Activated naive CD4-positive, alpha-beta T cell treated with anti-CD3 and anti-CD28 coated beads for 36 hours (primary cell): ENCODE measurements at regions of chr9 and their contacts with region 1.

Region 1: GRCh38 chr9:114830546-114830945 is 24.7 kb upstream of the TNFSF15 start:
- DNase-seq: no peak
- H3K4me3 Mint-ChIP-seq: no peak overlapping the region
- H3K27ac Mint-ChIP-seq: no peak overlapping the region
- H3K4me1 Mint-ChIP-seq: peaks cover 16% of the 10 kb centered on the region
- H3K27me3 Mint-ChIP-seq: no peaks in the 10 kb centered on the region

Region 2: DNA sequence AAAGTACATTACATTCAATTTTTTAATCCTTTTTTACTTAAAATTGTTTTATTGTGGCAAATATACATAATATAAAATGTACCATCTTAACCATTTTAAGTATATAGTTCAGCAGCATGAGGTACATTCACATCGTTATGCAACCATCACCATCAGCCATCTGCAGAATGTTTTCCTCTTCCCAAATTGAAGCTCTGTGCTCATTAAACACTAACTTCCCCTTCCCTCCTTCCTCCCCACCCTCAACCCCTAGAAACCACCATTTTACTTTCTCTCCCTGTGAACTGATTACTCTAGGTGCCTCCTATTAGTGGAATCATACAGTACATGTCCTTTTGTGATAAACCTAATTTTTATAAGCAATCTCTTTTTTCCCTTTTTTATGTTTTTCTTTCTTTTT is 188.6 kb before region 1 on chr9:
- CTCF ChIA-PET with region 1: no interaction called
- intact Hi-C with region 1: no loop called
- DNase-seq: no peak
- H3K4me3 Mint-ChIP-seq: no peak overlapping the region
- H3K27ac Mint-ChIP-seq: peak overlapping the region; percentile 1
- H3K4me1 Mint-ChIP-seq: peaks cover 5% of the 10 kb centered on the region
- H3K27me3 Mint-ChIP-seq: no peaks in the 10 kb centered on the region

Region 3: DNA sequence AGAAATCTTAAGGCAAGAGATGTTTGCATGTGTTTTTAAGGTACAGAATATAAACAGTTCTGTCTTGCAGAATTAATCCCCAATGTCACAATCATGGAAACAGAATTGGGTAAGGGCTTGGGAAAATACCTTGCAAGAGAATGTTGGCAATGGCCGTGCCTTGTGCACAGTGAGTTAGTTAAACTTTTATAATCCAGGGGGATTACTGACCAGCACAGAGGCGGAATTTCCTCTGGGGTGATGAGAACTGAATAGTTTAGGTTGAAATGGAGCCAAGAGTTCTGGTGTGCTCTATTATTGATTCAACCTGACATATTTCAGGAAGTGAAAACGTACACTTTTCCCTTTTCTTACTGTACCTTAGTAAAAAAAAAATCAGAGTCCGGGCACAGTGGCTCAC is 44.3 kb before region 1 on chr9:
- CTCF ChIA-PET with region 1: no interaction called
- intact Hi-C with region 1: no loop called
- DNase-seq: no peak
- H3K4me3 Mint-ChIP-seq: no peak overlapping the region
- H3K27ac Mint-ChIP-seq: no peak overlapping the region
- H3K4me1 Mint-ChIP-seq: no peaks in the 10 kb centered on the region
- H3K27me3 Mint-ChIP-seq: no peaks in the 10 kb centered on the region

Region 4: DNA sequence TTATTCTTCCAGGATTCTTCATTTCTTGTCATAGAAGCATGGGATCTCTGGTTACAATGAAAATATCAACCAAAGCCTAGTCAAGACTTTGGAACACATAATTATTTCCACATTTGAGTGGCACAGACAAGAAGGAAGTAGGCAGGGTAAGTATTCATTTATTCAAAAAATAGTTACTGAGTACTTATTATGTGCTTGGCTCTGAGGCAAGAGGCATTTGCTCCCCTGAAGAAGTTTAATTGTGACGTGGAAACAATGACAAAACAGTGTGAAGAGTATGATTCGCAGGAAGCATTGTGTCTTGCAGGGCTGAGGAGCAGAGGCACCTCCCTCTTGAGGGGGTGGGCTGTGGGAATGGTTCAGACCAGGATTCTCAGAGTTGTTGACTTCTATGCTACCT is 20.3 kb after region 1 on chr9:
- CTCF ChIA-PET with region 1: no interaction called
- intact Hi-C with region 1: loop called (anchors 2 kb)
- DNase-seq: peak; percentile 43
- H3K4me3 Mint-ChIP-seq: no peak overlapping the region
- H3K27ac Mint-ChIP-seq: peak overlapping the region; percentile 39
- H3K4me1 Mint-ChIP-seq: peaks cover 25% of the 10 kb centered on the region
- H3K27me3 Mint-ChIP-seq: no peaks in the 10 kb centered on the region

Region 5: GRCh38 chr9:114861922-114862605 is 31.5 kb after region 1 on chr9:
- CTCF ChIA-PET with region 1: no interaction called
- intact Hi-C with region 1: no loop called
- DNase-seq: no peak
- H3K4me3 Mint-ChIP-seq: no peak overlapping the region
- H3K27ac Mint-ChIP-seq: no peak overlapping the region
- H3K4me1 Mint-ChIP-seq: peaks cover 10% of the 10 kb centered on the region
- H3K27me3 Mint-ChIP-seq: no peaks in the 10 kb centered on the region